Activated T-helper 1 cell treated with anti-CD3 and anti-CD28 coated beads, Interleukin-12 subunit alpha, Interleukin-12 subunit beta, Interleukin-2, Interleukin-4 antibody, amounts not matched to agents 30 ng/mL and 10 ng/mL and 1 ng/mL, durations not matched to agents 14 hours and 24 hours and 36 hours (primary cell): ENCODE measurements at regions of chr17 and their contacts with region 1.

Region 1: GRCh38 chr17:32331243-32332040 is 10.5 kb downstream of the C17orf75 start:
- DNase-seq: no peak
- H3K4me3 Mint-ChIP-seq: peak overlapping the region; percentile 56
- H3K27ac Mint-ChIP-seq: peak overlapping the region; percentile 75
- H3K4me1 Mint-ChIP-seq: peaks cover 39% of the 10 kb centered on the region
- H3K27me3 Mint-ChIP-seq: no peaks in the 10 kb centered on the region

Region 2: DNA sequence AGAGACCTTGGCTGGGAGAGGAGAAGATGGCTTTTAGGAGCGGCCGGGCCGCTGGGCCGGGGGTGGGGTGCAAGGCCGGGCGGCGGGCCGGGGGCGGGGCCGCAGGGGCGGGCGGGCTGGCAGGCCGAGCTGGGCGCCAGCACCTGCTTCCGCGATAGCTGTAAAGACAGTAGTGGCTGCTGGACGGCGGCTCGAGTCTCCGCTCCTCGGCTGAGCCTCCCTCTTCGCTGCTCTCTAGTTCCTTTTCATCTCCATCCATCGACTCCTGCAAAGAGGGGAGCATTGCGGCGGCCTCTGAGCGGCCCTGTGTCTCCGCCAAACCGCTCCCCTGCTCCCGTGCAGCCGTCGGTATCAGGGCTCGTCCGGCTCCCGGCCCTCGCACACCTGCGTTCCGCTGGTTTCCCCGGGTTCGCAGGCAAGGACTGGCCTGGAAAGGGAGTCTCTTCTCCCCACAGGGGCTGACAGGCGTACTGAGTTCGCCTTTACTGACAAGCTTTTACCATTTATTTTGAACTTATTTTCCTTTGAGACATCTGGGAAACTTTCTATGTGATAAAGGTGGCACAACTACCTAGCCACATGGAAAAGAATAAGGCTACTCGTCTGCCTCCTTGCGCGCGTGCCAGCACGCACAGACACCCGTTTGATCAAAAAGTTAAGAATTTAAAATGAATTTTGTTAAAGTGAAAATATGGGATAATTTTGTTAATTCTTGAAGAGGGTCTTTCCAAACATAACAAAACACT is 10.6 kb after region 1 on chr17 and contains the start of gene C17orf75:
- intact Hi-C with region 1: loop called (anchors 1 kb)
- DNase-seq: peak; percentile 72
- H3K4me3 Mint-ChIP-seq: peak within 1 kb of the TSS; percentile 94
- H3K27ac Mint-ChIP-seq: peak within 1 kb of the TSS; percentile 97
- H3K4me1 Mint-ChIP-seq: peaks cover 27% of the 10 kb centered on the region
- H3K27me3 Mint-ChIP-seq: no peaks in the 10 kb centered on the region
- total RNA-seq, gene C17orf75: 34.1 and 37.6 TPM in 2 replicates